Cardiac septum (tissue), 1 donor: ENCODE measurements at regions of chr1 and their contacts with region 1.

Region 1: GRCh38 chr1:93437976-93438605 is 9.8 kb upstream of the FNBP1L start:
- DNase-seq: no peak

Region 2: GRCh38 chr1:93304716-93305138 is 133.4 kb before region 1 on chr1:
- intact Hi-C with region 1: loop called (anchors 5 kb)
- DNase-seq: no peak

Region 3: GRCh38 chr1:93814059-93814794 is 376.1 kb after region 1 on chr1:
- intact Hi-C with region 1: loop called (anchors 2 kb)
- DNase-seq: no peak